Dorsolateral prefrontal cortex (tissue), 120 donors: ENCODE measurements at regions of chr3 and their contacts with region 1.

Region 1: GRCh38 chr3:22960105-22960984 is 242.8 kb upstream of the UBE2E2 start:
- DNase-seq: peak in 4 of 10 donors; percentile 28 to 67 (median 36)
- H3K4me3 ChIP-seq: peak overlapping the region in 39 of 59 donors; percentile 3 to 55 (median 36)
- H3K27ac ChIP-seq: peak overlapping the region in 2 of 59 donors; percentile 29 to 62
- H3K27me3 ChIP-seq: no peaks in the 10 kb centered on the region
- CTCF ChIP-seq: peak; percentile 39 to 87 (median 76)

Region 2: GRCh38 chr3:22089284-22089683 is 871.1 kb before region 1 on chr3:
- intact Hi-C with region 1: loop called in 1 of 2 experiments (anchors 10 kb)
- DNase-seq: no peak
- H3K4me3 ChIP-seq: no peak overlapping the region
- H3K27ac ChIP-seq: no peak overlapping the region
- H3K27me3 ChIP-seq: no peaks in the 10 kb centered on the region
- CTCF ChIP-seq: peak in 36 of 56 donors; percentile 10 to 63 (median 34)

Region 3: GRCh38 chr3:22175947-22176346 is 784.4 kb before region 1 on chr3:
- intact Hi-C with region 1: loop called (anchors 5 to 10 kb)
- DNase-seq: no peak
- H3K4me3 ChIP-seq: no peak overlapping the region
- H3K27ac ChIP-seq: no peak overlapping the region
- H3K27me3 ChIP-seq: no peaks in the 10 kb centered on the region
- CTCF ChIP-seq: peak in 41 of 56 donors; percentile 13 to 52 (median 31)

Region 4: GRCh38 chr3:22555753-22556435 is 404.5 kb before region 1 on chr3:
- intact Hi-C with region 1: loop called (anchors 5 kb)
- DNase-seq: no peak
- H3K4me3 ChIP-seq: no peak overlapping the region
- H3K27ac ChIP-seq: no peak overlapping the region
- H3K27me3 ChIP-seq: no peaks in the 10 kb centered on the region
- CTCF ChIP-seq: no peak

Region 5: DNA sequence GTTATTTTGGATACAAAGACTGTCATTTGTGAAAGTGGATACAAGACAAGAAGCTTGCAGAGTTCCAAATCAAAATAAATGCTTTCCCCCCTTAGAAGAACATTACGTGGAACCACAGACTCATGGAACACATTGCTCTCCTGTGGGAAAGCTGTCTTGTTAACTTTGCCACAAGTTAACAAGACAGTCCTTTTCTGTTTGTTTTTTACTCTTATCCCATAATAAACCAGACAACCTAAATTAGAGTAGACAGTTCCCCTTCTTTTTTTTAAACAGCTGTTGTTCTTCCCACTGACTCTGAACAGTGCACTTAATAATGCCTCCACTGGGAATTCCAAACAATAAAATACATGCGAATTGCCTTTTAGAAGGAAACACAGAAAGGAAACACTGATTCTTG is 12.5 kb before region 1 on chr3:
- intact Hi-C with region 1: no loop called
- DNase-seq: no peak
- H3K4me3 ChIP-seq: no peak overlapping the region
- H3K27ac ChIP-seq: no peak overlapping the region
- H3K27me3 ChIP-seq: no peaks in the 10 kb centered on the region
- CTCF ChIP-seq: no peak